ENCODE measurements at regions of chr1 and their contacts with region 1.

Region 1: DNA sequence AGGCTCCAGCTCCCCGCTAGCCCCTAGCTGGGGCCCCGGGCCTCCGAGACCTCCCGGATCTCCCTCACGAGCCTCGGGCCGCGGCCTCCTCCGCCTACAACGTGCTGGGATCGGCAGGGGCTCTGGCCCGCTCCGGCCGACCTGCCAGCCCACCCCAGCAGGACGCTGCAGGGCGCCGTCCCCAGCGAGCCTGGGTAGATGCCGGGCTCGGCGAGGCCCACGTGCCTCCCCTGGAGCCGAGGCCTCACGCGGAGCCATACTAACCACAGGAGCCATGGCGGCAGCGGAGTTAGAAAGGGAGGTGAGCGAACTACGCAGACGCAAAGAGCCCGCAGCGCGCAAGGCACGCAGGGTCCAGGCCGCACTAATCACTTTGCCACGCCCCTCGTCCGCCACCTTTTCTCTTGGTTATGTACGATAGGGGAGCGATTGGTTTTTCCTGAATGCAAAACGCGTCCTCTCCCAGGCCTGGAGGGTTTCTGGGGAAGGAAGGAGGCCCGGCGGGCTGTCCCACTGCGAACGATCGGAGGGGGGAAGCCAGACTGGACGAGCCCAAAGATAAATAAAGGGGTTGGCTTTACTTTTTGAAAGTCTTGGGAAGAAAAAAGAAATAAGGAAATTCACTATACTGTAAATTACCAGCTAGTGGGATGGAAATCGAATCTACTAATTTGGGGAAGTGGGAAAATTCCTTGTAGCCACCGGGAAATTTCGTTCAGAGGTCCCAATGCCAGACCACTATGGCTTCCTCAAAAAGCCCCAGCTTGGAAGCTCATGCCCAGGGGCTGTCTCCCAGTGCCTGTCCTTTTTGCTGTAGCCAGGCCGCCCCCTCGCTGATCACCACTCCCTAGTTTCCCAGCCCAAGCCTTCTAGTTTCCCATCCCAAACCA is at the start of gene RPL22:
- DNase-seq: peak in 1 of 2 donors; percentile 98
- H3K4me3 ChIP-seq: peak within 1 kb of the TSS; percentile 92 to 100
- H3K27ac ChIP-seq: peak within 1 kb of the TSS; percentile 64
- H3K4me1 ChIP-seq: peaks cover 35% of the 10 kb centered on the region
- H3K27me3 ChIP-seq: no peaks in the 10 kb centered on the region
- CTCF ChIP-seq: no peak
- POLR2A ChIP-seq: peak in 1 of 2 donors; percentile 54
- total RNA-seq, gene RPL22: 154 TPM

Region 2: DNA sequence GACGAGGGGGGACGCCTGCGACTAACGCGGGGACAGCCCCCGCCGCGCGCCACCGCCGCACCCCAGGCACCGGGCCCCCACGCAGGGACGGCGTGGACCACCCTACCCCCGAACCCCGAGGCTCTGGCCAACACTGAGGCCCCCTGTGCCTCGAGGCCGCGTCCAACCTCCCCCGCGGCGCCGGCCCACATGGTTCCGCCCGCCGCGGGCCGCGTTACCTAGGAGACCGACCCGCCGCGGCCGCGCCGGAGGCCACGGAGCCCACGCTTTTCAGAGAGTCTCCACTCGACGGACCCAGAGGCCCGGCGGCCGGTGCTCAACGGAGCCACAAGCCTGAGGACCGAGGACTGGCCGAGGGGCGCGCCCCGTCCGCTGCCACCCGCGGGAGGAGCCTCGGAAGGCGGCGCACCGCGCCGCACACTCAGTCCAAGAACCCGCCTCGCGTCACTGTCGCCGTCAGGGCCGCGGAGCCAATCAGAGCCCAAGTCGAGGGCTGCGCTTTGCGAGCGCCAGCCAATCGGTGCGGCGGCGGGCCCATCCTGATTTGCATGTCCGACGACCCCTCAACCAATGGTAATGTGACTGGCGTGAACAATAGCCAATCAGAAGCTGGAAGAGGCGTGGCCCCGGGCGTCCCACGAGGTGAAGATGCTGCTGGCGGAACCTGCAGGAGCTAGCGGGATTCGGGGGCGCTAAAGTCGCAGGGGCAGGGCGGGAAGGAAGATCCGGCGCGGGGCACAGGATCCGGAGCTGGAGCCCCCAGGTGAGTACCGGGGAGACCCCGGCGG is 207.3 kb before region 1 on chr1 and contains the start of gene NPHP4:
- intact Hi-C with region 1: loop called (anchors 5 kb)
- DNase-seq: peak; percentile 99 to 100
- H3K4me3 ChIP-seq: peak within 1 kb of the TSS; percentile 82 to 84
- H3K27ac ChIP-seq: peak within 1 kb of the TSS; percentile 90
- H3K4me1 ChIP-seq: peaks cover 30% of the 10 kb centered on the region
- H3K27me3 ChIP-seq: no peaks in the 10 kb centered on the region
- CTCF ChIP-seq: no peak
- POLR2A ChIP-seq: no peak
- total RNA-seq, gene NPHP4: 11.3 TPM

Region 3: GRCh38 chr1:6185635-6186382 is 13.7 kb before region 1 on chr1:
- intact Hi-C with region 1: no loop called
- DNase-seq: no peak
- H3K4me3 ChIP-seq: no peak overlapping the region
- H3K27ac ChIP-seq: no peak overlapping the region
- H3K4me1 ChIP-seq: peaks cover 9% of the 10 kb centered on the region
- H3K27me3 ChIP-seq: no peaks in the 10 kb centered on the region
- CTCF ChIP-seq: no peak
- POLR2A ChIP-seq: no peak

Measured in vagina (tissue), 2 donors.